CD8-positive, alpha-beta T cell (primary cell): ENCODE measurements at regions of chr1 and their contacts with region 1.

Region 1: GRCh38 chr1:198157241-198157846 is 546 bp downstream of the NEK7 start:
- DNase-seq: peak; percentile 51 to 92 (median 82)
- ATAC-seq: peak; percentile 43
- H3K4me3 ChIP-seq: peak overlapping the region; percentile 67 to 86
- H3K4me3 Mint-ChIP-seq: peak overlapping the region; percentile 99
- H3K27ac ChIP-seq: peak overlapping the region; percentile 85 to 88
- H3K27ac Mint-ChIP-seq: peak overlapping the region; percentile 100
- H3K4me1 ChIP-seq: peaks cover 31% of the 10 kb centered on the region
- H3K4me1 Mint-ChIP-seq: peaks cover 41% of the 10 kb centered on the region
- H3K27me3 ChIP-seq: no peaks in the 10 kb centered on the region
- H3K27me3 Mint-ChIP-seq: no peaks in the 10 kb centered on the region
- CTCF ChIP-seq: no peak

Region 2: GRCh38 chr1:197937892-197938291 is 219.5 kb before region 1 on chr1:
- CTCF ChIA-PET with region 1: no interaction called
- POLR2A ChIA-PET with region 1: no interaction called
- intact Hi-C with region 1: no loop called
- DNase-seq: no peak
- ATAC-seq: no peak
- H3K4me3 ChIP-seq: no peak overlapping the region
- H3K4me3 Mint-ChIP-seq: no peak overlapping the region
- H3K27ac ChIP-seq: no peak overlapping the region
- H3K27ac Mint-ChIP-seq: no peak overlapping the region
- H3K4me1 ChIP-seq: no peaks in the 10 kb centered on the region
- H3K4me1 Mint-ChIP-seq: no peaks in the 10 kb centered on the region
- H3K27me3 ChIP-seq: peaks cover 0 to 5% of the 10 kb centered on the region in 2 experiments
- H3K27me3 Mint-ChIP-seq: peaks cover 8% of the 10 kb centered on the region
- CTCF ChIP-seq: no peak

Region 3: GRCh38 chr1:198088360-198089071 is 68.8 kb before region 1 on chr1:
- CTCF ChIA-PET with region 1: interaction called, 4 read pairs
- POLR2A ChIA-PET with region 1: no interaction called
- intact Hi-C with region 1: loop called (anchors 1 to 5 kb)
- DNase-seq: peak in 4 of 9 experiments; percentile 7 to 66 (median 30)
- ATAC-seq: peak; percentile 51
- H3K4me3 ChIP-seq: no peak overlapping the region
- H3K4me3 Mint-ChIP-seq: no peak overlapping the region
- H3K27ac ChIP-seq: no peak overlapping the region
- H3K27ac Mint-ChIP-seq: no peak overlapping the region
- H3K4me1 ChIP-seq: no peaks in the 10 kb centered on the region
- H3K4me1 Mint-ChIP-seq: peaks cover 3% of the 10 kb centered on the region
- H3K27me3 ChIP-seq: no peaks in the 10 kb centered on the region
- H3K27me3 Mint-ChIP-seq: no peaks in the 10 kb centered on the region
- CTCF ChIP-seq: peak; percentile 78

Region 4: DNA sequence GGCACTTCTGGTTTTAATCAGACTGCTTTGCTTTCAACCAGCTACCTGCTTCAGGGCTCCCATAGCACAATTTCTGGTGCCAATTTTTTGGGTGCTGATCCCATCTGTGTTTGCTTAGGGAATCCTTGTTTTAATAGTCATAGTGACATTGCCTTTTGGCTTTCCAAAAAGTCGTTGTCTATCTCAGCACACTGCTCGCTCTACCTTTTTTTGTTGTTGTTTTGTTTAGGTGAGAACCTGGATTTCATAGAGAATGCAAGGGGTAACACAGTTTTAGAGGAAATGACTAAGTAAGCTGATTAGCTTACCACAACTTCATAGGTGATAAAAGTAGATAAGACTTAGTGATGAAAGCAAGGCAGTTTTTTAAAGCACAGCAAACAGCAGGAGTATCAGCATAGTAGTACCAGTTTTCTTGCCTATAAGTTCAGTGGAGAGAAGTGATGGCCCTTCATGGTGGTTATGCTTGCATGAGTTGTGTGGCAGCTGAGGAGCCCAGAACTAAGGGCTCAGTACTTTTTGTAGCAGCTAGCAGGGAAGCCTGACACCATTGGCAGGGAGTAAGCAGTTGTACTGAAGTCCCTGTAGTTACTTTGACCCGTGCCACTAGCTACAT is 30.7 kb after region 1 on chr1:
- CTCF ChIA-PET with region 1: no interaction called
- POLR2A ChIA-PET with region 1: interaction called, 6 read pairs
- intact Hi-C with region 1: loop called in 1 of 2 experiments (anchors 1 kb)
- DNase-seq: peak in 6 of 9 experiments; percentile 27 to 79 (median 45)
- ATAC-seq: peak; percentile 87
- H3K4me3 ChIP-seq: no peak overlapping the region
- H3K4me3 Mint-ChIP-seq: peak overlapping the region; percentile 23
- H3K27ac ChIP-seq: peak overlapping the region in 1 of 2 experiments; percentile 78
- H3K27ac Mint-ChIP-seq: peak overlapping the region; percentile 81
- H3K4me1 ChIP-seq: peaks cover 64% of the 10 kb centered on the region
- H3K4me1 Mint-ChIP-seq: peaks cover 83% of the 10 kb centered on the region
- H3K27me3 ChIP-seq: no peaks in the 10 kb centered on the region
- H3K27me3 Mint-ChIP-seq: no peaks in the 10 kb centered on the region
- CTCF ChIP-seq: no peak

Region 5: GRCh38 chr1:198275597-198275996 is 118.3 kb after region 1 on chr1:
- CTCF ChIA-PET with region 1: interaction called, 8 read pairs
- POLR2A ChIA-PET with region 1: interaction called, 4 read pairs
- intact Hi-C with region 1: loop called in 1 of 2 experiments (anchors 5 kb)
- DNase-seq: peak in 1 of 9 experiments; percentile 28
- ATAC-seq: no peak
- H3K4me3 ChIP-seq: no peak overlapping the region
- H3K4me3 Mint-ChIP-seq: no peak overlapping the region
- H3K27ac ChIP-seq: no peak overlapping the region
- H3K27ac Mint-ChIP-seq: no peak overlapping the region
- H3K4me1 ChIP-seq: no peaks in the 10 kb centered on the region
- H3K4me1 Mint-ChIP-seq: peaks cover 12% of the 10 kb centered on the region
- H3K27me3 ChIP-seq: no peaks in the 10 kb centered on the region
- H3K27me3 Mint-ChIP-seq: no peaks in the 10 kb centered on the region
- CTCF ChIP-seq: no peak

Region 6: GRCh38 chr1:198929961-198930599 is 772.7 kb after region 1 on chr1:
- CTCF ChIA-PET with region 1: no interaction called
- POLR2A ChIA-PET with region 1: no interaction called
- intact Hi-C with region 1: loop called (anchors 5 to 10 kb)
- DNase-seq: peak in 3 of 9 experiments; percentile 11 to 71 (median 39)
- ATAC-seq: peak; percentile 66
- H3K4me3 ChIP-seq: peak overlapping the region; percentile 22 to 43
- H3K4me3 Mint-ChIP-seq: peak overlapping the region; percentile 83
- H3K27ac ChIP-seq: no peak overlapping the region
- H3K27ac Mint-ChIP-seq: peak overlapping the region; percentile 87
- H3K4me1 ChIP-seq: peaks cover 44% of the 10 kb centered on the region
- H3K4me1 Mint-ChIP-seq: peaks cover 53% of the 10 kb centered on the region
- H3K27me3 ChIP-seq: no peaks in the 10 kb centered on the region
- H3K27me3 Mint-ChIP-seq: no peaks in the 10 kb centered on the region
- CTCF ChIP-seq: no peak

Region 7: GRCh38 chr1:199529324-199529723 is 1372.0 kb after region 1 on chr1:
- CTCF ChIA-PET with region 1: no interaction called
- POLR2A ChIA-PET with region 1: no interaction called
- intact Hi-C with region 1: no loop called
- DNase-seq: no peak
- ATAC-seq: no peak
- H3K4me3 ChIP-seq: no peak overlapping the region
- H3K4me3 Mint-ChIP-seq: no peak overlapping the region
- H3K27ac ChIP-seq: no peak overlapping the region
- H3K27ac Mint-ChIP-seq: no peak overlapping the region
- H3K4me1 ChIP-seq: no peaks in the 10 kb centered on the region
- H3K4me1 Mint-ChIP-seq: no peaks in the 10 kb centered on the region
- H3K27me3 ChIP-seq: no peaks in the 10 kb centered on the region
- H3K27me3 Mint-ChIP-seq: no peaks in the 10 kb centered on the region
- CTCF ChIP-seq: no peak